Transverse colon (tissue), 4 donors: ENCODE measurements at regions of chrX and their contacts with region 1.

Region 1: GRCh38 chrX:130539721-130540321 is 138.0 kb downstream of the RBMX2 start:
- DNase-seq: peak; percentile 34
- H3K4me3 ChIP-seq: no peak overlapping the region
- H3K27ac ChIP-seq: no peak overlapping the region
- H3K4me1 ChIP-seq: no peaks in the 10 kb centered on the region
- H3K27me3 ChIP-seq: no peaks in the 10 kb centered on the region
- CTCF ChIP-seq: peak; percentile 40 to 59 (median 43)
- EP300 ChIP-seq: no peak
- POLR2A ChIP-seq: no peak

Region 2: DNA sequence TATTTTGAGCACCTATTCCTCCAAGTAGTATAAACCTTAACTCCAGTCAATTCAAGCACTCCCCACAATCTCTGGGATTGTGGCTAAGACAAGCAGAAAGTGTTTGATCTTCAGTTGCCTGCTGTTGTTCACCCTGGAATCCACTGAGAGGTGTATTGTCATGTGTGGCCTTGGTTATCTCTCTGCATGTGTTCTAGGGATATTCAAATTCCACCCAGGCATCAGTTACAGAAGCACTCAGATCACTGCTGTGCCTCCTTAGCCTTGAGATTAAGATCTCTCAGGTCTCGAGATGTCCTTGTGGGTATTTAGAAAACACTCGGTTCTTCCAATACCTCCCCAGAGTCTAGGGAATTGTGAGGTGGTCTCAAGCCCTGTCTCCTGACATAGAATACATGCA is 1229.8 kb before region 1 on chrX:
- in situ Hi-C with region 1: no loop called
- intact Hi-C with region 1: no loop called
- DNase-seq: no peak
- H3K4me3 ChIP-seq: no peak overlapping the region
- H3K27ac ChIP-seq: no peak overlapping the region
- H3K4me1 ChIP-seq: no peaks in the 10 kb centered on the region
- H3K27me3 ChIP-seq: no peaks in the 10 kb centered on the region
- CTCF ChIP-seq: no peak
- EP300 ChIP-seq: no peak
- POLR2A ChIP-seq: no peak

Region 3: GRCh38 chrX:130497531-130497930 is 42.3 kb before region 1 on chrX:
- in situ Hi-C with region 1: no loop called
- intact Hi-C with region 1: no loop called
- DNase-seq: no peak
- H3K4me3 ChIP-seq: no peak overlapping the region
- H3K27ac ChIP-seq: no peak overlapping the region
- H3K4me1 ChIP-seq: no peaks in the 10 kb centered on the region
- H3K27me3 ChIP-seq: no peaks in the 10 kb centered on the region
- CTCF ChIP-seq: no peak
- EP300 ChIP-seq: no peak
- POLR2A ChIP-seq: no peak

Region 4: DNA sequence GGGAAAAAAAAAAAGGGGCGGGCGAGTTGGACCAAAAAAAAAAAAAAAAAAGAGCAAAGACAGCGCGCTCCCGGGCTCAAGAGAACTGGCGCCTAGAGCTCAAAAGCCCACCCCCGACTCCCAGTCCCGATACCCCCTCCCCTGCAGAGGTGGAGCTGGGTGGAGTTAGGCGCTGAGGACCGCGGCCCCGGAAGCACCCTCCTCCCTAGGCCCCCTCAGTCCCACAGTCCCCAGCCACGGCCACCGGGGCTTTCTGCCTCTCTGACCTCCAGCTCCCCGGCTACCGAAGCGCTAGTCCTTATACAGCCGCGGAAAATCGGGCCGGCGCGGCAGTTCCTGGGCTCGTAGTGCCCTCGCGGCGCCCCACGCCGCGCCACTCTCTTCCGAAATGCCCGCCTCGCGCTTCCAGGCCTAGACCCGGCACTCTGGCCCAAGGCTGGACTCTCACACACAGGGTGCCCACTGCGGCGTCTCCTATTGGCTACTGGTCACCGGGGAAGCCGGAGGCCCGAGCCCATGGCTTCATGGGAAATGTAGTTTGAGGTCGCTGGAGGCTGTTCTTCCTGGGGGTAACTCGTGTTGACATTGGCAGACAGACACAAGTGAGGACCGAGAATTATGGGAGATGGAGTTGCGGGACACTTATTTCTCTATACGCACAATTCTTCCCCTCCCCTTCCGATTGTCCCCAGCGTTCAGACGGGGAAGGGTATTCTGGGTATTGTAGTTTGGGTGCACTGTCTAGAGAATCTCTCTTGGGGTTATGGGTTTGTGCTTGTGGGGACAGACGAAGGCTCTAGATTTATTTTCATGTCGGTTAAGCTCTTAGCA is 363.2 kb after region 1 on chrX and contains the start of gene ENOX2:
- in situ Hi-C with region 1: loop called in 3 of 4 experiments (anchors 25 kb)
- intact Hi-C with region 1: no loop called
- DNase-seq: peak; percentile 91
- H3K4me3 ChIP-seq: peak within 1 kb of the TSS; percentile 45 to 90 (median 82)
- H3K27ac ChIP-seq: peak within 1 kb of the TSS; percentile 74 to 88 (median 84)
- H3K4me1 ChIP-seq: peaks cover 0 to 7% (median 3%) of the 10 kb centered on the region in 4 donors
- H3K27me3 ChIP-seq: no peaks in the 10 kb centered on the region
- CTCF ChIP-seq: peak in 2 of 5 experiments; percentile 27 to 36
- EP300 ChIP-seq: no peak
- POLR2A ChIP-seq: peak; percentile 78
- total RNA-seq, gene ENOX2: 1.5 to 10.4 (median 4.6) TPM

Region 5: GRCh38 chrX:130916636-130917422 is 377.0 kb after region 1 on chrX:
- in situ Hi-C with region 1: loop called (anchors 10 to 25 kb)
- intact Hi-C with region 1: no loop called
- DNase-seq: peak; percentile 35
- H3K4me3 ChIP-seq: no peak overlapping the region
- H3K27ac ChIP-seq: no peak overlapping the region
- H3K4me1 ChIP-seq: no peaks in the 10 kb centered on the region
- H3K27me3 ChIP-seq: no peaks in the 10 kb centered on the region
- CTCF ChIP-seq: peak; percentile 57 to 87 (median 65)
- EP300 ChIP-seq: no peak
- POLR2A ChIP-seq: no peak